CD4-positive, alpha-beta T cell (primary cell): ENCODE measurements at regions of chr17 and their contacts with region 1.

Region 1: DNA sequence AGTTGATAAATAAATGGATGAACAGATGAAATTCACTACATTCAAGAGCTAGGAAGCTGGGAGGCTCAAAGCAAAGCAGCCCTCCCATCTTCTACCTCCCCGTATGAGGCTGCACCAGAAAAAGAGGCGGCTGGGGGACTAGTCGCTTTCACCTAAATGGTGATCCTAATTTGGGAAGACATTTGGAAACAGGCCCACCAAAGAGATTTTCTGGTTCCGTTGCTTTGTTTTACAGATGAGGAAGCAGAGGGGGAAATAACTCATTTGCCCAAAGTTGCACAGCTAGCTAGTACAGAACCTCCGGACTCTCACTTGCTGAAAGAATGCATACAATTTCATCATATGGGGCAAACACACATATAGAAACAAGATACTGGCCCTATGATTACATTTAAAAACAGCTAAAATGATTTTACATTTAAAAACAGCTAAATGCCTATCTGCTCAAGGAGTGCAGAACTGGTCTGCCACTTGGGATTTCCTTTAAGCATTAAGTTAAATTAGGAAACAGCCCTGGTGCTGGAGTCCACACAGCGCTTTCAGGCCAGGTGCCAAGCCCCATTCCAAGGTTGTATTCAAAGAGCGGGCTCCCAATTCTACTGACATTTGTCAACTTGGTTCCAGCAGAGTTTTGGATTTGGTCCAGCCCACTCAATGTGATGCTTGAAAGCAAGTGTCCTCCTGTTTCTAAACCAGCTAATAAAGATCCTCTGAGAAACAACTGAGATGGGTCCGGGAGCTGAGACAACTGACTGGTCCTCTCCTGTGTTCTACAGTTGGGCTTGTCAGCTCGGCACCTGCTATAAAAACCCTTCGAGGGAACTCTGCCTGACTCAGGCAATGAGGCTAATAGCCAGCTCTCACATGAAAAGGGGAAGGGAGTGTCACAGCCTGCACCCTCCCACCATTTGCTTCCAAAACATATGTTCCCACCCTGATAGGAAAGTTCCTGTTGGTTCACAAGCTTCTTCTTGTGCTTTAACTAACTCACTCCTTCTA is 11.7 kb downstream of the ERN1 start:
- DNase-seq: peak in 2 of 14 experiments; percentile 44 to 49
- ATAC-seq: no peak
- H3K4me3 ChIP-seq: no peak overlapping the region
- H3K4me3 Mint-ChIP-seq: no peak overlapping the region
- H3K27ac ChIP-seq: no peak overlapping the region
- H3K27ac Mint-ChIP-seq: peak overlapping the region; percentile 35
- H3K4me1 ChIP-seq: peaks cover 73% of the 10 kb centered on the region
- H3K4me1 Mint-ChIP-seq: peaks cover 67% of the 10 kb centered on the region
- H3K27me3 ChIP-seq: no peaks in the 10 kb centered on the region
- H3K27me3 Mint-ChIP-seq: no peaks in the 10 kb centered on the region
- CTCF ChIP-seq: no peak

Region 2: DNA sequence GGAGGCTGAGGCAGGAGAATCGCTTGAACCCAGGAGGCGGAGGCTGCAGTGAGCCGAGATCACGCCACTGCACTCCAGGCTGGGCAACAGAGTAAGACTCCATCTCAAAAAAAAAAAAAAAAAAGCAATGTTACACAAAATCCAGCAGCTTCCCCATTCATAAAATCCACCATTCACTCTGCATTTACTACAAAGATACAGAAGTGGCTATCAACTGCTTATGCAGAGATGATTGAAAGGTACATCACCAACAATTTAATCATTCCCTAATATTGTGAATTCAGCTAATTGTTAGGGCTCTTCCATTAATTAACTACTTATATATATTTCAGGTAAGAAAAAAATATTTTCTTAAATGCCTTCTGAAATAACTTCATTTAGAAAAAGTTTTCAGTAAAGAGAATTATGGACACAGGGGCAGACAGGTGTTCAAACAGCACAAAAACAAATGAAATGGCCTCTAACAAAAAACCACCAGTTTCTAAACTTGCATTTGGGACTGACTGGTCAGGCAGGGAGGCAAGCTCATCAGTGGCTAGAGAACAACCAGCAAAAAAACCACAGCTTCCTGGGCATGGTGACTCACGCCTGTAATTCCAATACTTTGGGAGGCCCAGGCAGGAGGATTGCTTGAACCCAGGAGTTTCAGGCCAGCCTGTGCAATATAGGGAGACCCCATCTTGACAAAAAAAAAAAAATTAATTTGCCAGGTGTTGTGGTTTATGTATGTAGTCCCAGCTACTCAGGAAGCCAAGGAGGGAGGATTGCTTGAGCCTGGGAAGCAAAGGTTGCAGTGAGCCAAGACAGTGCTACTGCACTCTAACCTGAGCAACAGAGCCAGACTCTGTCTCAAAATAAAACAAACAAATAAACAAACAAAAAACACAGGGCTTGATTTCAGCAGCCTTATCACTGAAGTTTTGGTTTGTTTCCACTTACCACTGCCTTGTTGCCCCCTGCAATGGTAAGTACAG is 14.6 kb before region 1 on chr17:
- CTCF ChIA-PET with region 1: interaction called, 3 read pairs
- POLR2A ChIA-PET with region 1: interaction called, 10 read pairs
- intact Hi-C with region 1: loop called in 1 of 2 experiments (anchors 2 kb)
- DNase-seq: peak in 1 of 14 experiments; percentile 37
- ATAC-seq: no peak
- H3K4me3 ChIP-seq: no peak overlapping the region
- H3K4me3 Mint-ChIP-seq: peak overlapping the region; percentile 30
- H3K27ac ChIP-seq: no peak overlapping the region
- H3K27ac Mint-ChIP-seq: no peak overlapping the region
- H3K4me1 ChIP-seq: peaks cover 60% of the 10 kb centered on the region
- H3K4me1 Mint-ChIP-seq: peaks cover 72% of the 10 kb centered on the region
- H3K27me3 ChIP-seq: no peaks in the 10 kb centered on the region
- H3K27me3 Mint-ChIP-seq: no peaks in the 10 kb centered on the region
- CTCF ChIP-seq: no peak

Region 3: DNA sequence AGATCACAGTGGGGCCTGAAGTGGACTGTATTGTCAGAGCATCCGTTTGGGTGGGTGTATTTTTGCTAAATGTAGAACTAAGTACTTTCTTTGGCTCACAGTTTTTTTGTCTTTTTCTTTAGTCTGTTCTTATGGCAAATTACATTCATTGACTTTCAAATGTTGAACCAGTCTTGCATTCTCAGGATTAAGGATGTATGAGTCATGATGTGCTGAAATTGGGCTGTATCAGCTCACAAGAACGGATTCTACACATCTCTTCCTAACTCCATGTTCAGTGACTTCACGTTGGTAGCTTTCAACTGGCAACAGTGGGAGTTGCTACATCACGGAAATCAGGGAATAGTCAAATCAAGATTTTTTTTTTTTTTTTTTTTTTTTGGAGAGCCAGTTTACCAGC is 78.3 kb after region 1 on chr17:
- CTCF ChIA-PET with region 1: no interaction called
- POLR2A ChIA-PET with region 1: no interaction called
- intact Hi-C with region 1: no loop called
- DNase-seq: no peak
- ATAC-seq: no peak
- H3K4me3 ChIP-seq: no peak overlapping the region
- H3K4me3 Mint-ChIP-seq: no peak overlapping the region
- H3K27ac ChIP-seq: no peak overlapping the region
- H3K27ac Mint-ChIP-seq: no peak overlapping the region
- H3K4me1 ChIP-seq: peaks cover 6% of the 10 kb centered on the region
- H3K4me1 Mint-ChIP-seq: peaks cover 12% of the 10 kb centered on the region
- H3K27me3 ChIP-seq: no peaks in the 10 kb centered on the region
- H3K27me3 Mint-ChIP-seq: no peaks in the 10 kb centered on the region
- CTCF ChIP-seq: no peak